ENCODE measurements at regions of chrX and their contacts with region 1.

Region 1: GRCh38 chrX:155966865-155967264 is 30.6 kb upstream of the IL9R start:
- DNase-seq: peak in 2 of 9 donors; percentile 2 to 29
- ATAC-seq: peak; percentile 49
- H3K4me3 ChIP-seq: no peak overlapping the region
- H3K4me3 Mint-ChIP-seq: no peak overlapping the region
- H3K27ac ChIP-seq: no peak overlapping the region
- H3K27ac Mint-ChIP-seq: no peak overlapping the region
- H3K4me1 ChIP-seq: no peaks in the 10 kb centered on the region
- H3K4me1 Mint-ChIP-seq: peaks cover 0 to 23% (median 0%) of the 10 kb centered on the region in 7 donors
- H3K27me3 ChIP-seq: peaks cover 0 to 2% of the 10 kb centered on the region in 2 donors
- H3K27me3 Mint-ChIP-seq: peaks cover 6 to 52% (median 28%) of the 10 kb centered on the region in 5 donors

Region 2: DNA sequence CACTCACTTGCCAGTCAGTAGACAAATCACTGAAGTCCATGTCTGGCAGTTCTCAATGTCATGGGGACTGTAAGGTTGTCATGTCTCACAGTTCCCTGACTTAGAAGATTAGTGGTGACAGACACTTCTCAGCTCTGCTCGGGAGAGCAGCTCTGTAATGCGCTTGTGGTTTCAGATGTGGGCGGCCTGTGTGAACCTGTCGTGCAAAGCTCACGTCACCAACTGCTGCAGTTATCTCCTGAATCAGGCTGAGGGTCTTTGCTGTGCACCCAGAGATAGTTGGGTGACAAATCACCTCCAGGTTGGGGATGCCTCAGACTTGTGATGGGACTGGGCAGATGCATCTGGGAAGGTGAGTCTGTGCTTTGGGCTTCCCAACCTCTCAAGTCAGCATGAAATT is 30.6 kb after region 1 on chrX and contains the start of gene IL9R:
- CTCF ChIA-PET with region 1: no interaction called
- POLR2A ChIA-PET with region 1: no interaction called
- intact Hi-C with region 1: loop called in 1 of 2 experiments (anchors 1 kb)
- DNase-seq: peak in 2 of 9 donors; percentile 13 to 59
- ATAC-seq: peak; percentile 75
- H3K4me3 ChIP-seq: no peak within 1 kb of the TSS
- H3K4me3 Mint-ChIP-seq: peak within 1 kb of the TSS in 1 of 10 donors; percentile 92
- H3K27ac ChIP-seq: no peak within 1 kb of the TSS
- H3K27ac Mint-ChIP-seq: peak within 1 kb of the TSS in 4 of 9 donors; percentile 23 to 94 (median 40)
- H3K4me1 ChIP-seq: peaks cover 0 to 5% of the 10 kb centered on the region in 2 donors
- H3K4me1 Mint-ChIP-seq: peaks cover 0 to 64% (median 8%) of the 10 kb centered on the region in 7 donors
- H3K27me3 ChIP-seq: no peaks in the 10 kb centered on the region
- H3K27me3 Mint-ChIP-seq: no peaks in the 10 kb centered on the region
- total RNA-seq, gene IL9R: 1.2 to 52.7 (median 2.2) TPM in 4 of 5 experiments, not detected in the other

Measured in naive thymus-derived CD4-positive, alpha-beta T cell (primary cell).